AG04449 (cell line): ENCODE measurements at regions of chr6 and their contacts with region 1.

Region 1: DNA sequence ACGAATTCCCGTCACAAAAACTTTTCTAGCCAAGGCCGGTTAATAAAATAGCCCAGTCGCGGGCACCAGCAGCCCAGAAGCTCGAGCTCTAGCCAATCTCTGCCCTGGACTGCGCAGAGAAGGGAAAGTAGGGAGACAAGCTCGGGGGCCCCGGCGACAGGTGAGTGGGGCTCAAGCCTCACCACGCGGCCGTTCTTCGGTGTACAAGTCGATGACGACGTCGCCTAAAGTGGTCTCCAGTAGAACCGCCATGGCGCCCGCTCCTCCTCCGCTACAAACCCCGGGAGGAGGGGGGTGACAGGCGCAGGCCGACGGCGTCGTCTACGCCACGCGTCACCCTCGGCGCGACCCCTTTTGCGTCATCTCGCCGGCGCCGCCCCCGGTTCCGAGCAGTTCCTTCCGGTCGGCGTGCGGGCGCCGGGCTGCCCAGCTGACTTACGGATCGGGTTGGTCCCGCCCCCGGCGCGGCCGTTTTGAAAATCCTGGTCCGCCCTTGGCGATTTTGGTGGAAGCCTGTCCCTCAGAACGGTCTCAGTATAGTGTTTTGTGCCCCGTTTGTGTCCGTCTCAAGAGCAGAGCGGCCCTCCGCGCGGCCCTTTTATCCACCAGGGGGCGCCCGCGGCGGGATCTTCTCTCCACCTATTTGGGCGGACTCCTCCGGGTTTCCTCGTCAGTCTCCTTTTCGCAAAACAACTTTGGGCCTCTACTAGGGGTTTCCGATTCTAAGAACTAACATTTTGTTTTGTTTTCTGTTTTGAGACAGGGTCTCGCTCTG is at the start of gene PPIL4:
- DNase-seq: peak; percentile 56
- H3K4me3 ChIP-seq: peak within 1 kb of the TSS; percentile 94
- CTCF ChIP-seq: peak; percentile 62

Region 2: GRCh38 chr6:149534742-149535141 is 11.2 kb before region 1 on chr6:
- CTCF ChIA-PET with region 1: interaction called, 16 read pairs
- POLR2A ChIA-PET with region 1: no interaction called
- DNase-seq: no peak
- H3K4me3 ChIP-seq: no peak overlapping the region
- CTCF ChIP-seq: no peak

Region 3: DNA sequence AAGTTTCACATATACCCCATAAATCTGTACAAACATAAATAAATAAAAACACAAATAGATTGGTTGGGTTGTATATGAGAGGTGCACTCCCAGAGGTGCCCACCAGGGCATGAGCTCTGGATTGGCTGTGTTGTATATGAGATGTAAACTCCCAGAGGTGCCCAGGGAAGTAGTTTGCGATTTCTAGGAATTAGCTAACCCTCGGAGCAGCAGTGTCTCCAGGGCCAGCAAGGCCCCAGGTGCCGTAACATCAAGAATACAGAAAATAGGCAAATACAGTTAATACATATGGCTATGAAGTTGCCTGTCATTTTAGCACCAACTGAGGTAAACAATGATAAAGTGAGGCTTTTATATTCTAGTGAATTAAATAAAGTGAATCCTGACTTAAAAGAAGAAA is 14.8 kb after region 1 on chr6:
- CTCF ChIA-PET with region 1: interaction called, 34 read pairs
- POLR2A ChIA-PET with region 1: no interaction called
- DNase-seq: no peak
- H3K4me3 ChIP-seq: no peak overlapping the region
- CTCF ChIP-seq: peak; percentile 33